ENCODE measurements at regions of chr10 and their contacts with region 1.

Region 1: DNA sequence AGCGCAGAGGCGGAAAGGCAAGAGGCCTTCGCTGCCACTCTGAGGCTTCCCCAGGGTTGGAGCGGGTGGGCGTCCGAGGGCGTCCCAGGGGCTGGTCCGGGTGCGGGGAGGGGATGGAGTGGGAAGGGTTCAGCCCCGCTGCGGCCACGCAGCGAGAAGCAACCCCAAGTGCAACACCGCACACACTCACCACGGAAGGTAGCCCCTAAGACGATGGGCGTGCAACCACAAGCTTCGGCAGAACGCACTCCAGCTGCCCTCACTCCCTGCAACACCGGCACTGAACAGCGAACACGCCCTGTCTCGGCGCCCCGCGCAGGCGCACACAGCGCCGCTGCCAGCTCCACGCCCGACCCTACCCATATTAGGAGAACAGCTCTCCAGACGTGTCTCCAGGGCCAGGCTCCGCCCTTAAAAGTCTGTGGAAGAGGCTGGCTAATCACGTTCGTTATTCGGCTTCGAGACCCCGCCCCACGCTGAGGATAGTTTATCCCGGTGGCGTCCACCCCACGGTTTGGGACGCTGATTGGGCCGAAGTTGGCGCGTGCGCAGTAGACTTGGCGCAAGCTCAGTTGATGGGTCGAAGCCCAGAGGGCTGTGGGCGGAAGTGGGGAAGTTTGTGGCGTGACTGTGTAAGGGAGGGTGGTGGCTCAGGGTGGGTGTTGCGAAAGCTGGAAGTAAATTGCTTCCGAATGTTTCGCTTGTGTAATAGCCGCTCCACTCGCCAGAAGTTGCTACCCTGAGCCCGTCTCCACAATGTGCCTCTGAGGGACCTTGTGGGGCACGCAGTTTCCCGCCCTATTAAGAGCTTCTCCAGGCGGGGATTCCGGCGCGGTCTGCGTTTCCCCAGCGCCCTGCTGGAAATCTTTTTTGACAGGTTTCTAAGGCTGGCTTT is at the start of gene RSU1:
- DNase-seq: peak; percentile 100
- H3K4me3 Mint-ChIP-seq: peak within 1 kb of the TSS; percentile 85
- H3K27ac Mint-ChIP-seq: peak within 1 kb of the TSS; percentile 92
- H3K4me1 Mint-ChIP-seq: peaks cover 40% of the 10 kb centered on the region
- H3K27me3 Mint-ChIP-seq: peaks cover 4% of the 10 kb centered on the region
- total RNA-seq, gene RSU1: 74.3 to 74.9 TPM

Region 2: GRCh38 chr10:16828114-16828568 is 10.8 kb after region 1 on chr10:
- CTCF ChIA-PET with region 1: interaction called, 10 read pairs
- POLR2A ChIA-PET with region 1: interaction called, 7 read pairs
- DNase-seq: peak; percentile 65
- H3K4me3 Mint-ChIP-seq: no peak overlapping the region
- H3K27ac Mint-ChIP-seq: no peak overlapping the region
- H3K4me1 Mint-ChIP-seq: peaks cover 8% of the 10 kb centered on the region
- H3K27me3 Mint-ChIP-seq: no peaks in the 10 kb centered on the region